Naive thymus-derived CD4-positive, alpha-beta T cell (primary cell): ENCODE measurements at regions of chr11 and their contacts with region 1.

Region 1: DNA sequence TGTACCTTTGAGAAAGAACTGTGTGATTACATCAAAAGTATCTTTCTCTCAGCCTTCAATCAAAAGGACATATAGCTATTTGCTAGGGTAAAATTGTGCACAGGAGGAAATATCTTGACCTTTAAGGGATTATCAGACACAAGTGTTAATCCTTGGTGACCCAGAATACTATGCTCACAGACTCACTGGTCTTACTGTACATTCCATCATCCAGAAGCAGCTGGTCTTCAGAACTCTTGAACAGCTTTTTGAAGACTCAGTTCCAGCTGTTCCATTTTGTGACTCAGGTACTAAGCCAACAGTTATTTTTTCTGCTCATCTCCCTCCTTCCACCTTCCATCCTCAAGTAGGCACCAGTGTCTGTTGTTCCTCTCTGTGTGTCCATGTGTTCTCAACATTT is 19.8 kb downstream of the ZBED5 start:
- DNase-seq: no peak
- ATAC-seq: no peak
- H3K4me3 ChIP-seq: no peak overlapping the region
- H3K4me3 Mint-ChIP-seq: no peak overlapping the region
- H3K27ac ChIP-seq: no peak overlapping the region
- H3K27ac Mint-ChIP-seq: no peak overlapping the region
- H3K4me1 ChIP-seq: no peaks in the 10 kb centered on the region
- H3K4me1 Mint-ChIP-seq: peaks cover 3 to 9% (median 5%) of the 10 kb centered on the region in 7 donors
- H3K27me3 ChIP-seq: no peaks in the 10 kb centered on the region
- H3K27me3 Mint-ChIP-seq: no peaks in the 10 kb centered on the region

Region 2: GRCh38 chr11:10847960-10848870 is 10.1 kb after region 1 on chr11:
- CTCF ChIA-PET with region 1: interaction called, 11 read pairs
- POLR2A ChIA-PET with region 1: interaction called, 3 read pairs
- intact Hi-C with region 1: no loop called
- DNase-seq: no peak
- ATAC-seq: no peak
- H3K4me3 ChIP-seq: no peak overlapping the region
- H3K4me3 Mint-ChIP-seq: no peak overlapping the region
- H3K27ac ChIP-seq: no peak overlapping the region
- H3K27ac Mint-ChIP-seq: peak overlapping the region in 5 of 9 donors; percentile 33 to 76 (median 45)
- H3K4me1 ChIP-seq: no peaks in the 10 kb centered on the region
- H3K4me1 Mint-ChIP-seq: peaks cover 6 to 40% (median 21%) of the 10 kb centered on the region in 7 donors
- H3K27me3 ChIP-seq: no peaks in the 10 kb centered on the region
- H3K27me3 Mint-ChIP-seq: no peaks in the 10 kb centered on the region